ENCODE measurements at regions of chr6 and their contacts with region 1.

Region 1: DNA sequence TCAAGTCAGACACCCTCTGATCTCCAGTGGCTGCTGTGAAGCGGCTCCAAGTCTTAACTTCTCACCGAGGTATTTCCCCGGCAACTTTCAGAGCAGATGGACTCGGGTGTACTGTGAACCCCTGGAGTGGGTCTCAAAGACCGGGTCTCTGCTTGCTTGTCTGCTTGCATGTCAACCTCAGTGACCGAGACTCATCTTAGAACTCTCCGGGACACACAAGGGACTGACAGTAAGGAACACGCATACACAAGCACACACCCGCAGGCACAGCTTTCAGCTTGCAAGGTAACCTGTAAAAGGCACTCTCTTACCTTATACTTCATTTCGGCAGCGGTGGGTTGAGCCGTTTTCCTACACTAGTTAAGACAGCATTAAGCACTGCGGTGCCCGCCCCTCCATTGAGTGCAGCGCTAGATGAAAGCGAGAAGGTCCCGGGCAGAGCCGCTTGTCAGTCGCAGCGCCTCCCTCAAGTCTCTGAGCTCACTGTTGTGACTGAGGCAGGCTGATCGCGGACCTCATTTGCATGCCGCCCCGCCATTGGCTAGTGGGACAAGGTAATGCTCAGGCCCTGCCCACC is at the start of gene NEDD9:
- DNase-seq: peak; percentile 93
- H3K4me3 Mint-ChIP-seq: peak within 1 kb of the TSS; percentile 98
- H3K27ac Mint-ChIP-seq: peak within 1 kb of the TSS; percentile 96
- H3K4me1 Mint-ChIP-seq: peaks cover 86% of the 10 kb centered on the region
- H3K27me3 Mint-ChIP-seq: no peaks in the 10 kb centered on the region
- total RNA-seq, gene NEDD9: 53.2 and 62.1 TPM in 2 replicates

Region 2: GRCh38 chr6:11172501-11173332 is 59.6 kb before region 1 on chr6:
- intact Hi-C with region 1: loop called (anchors 2 kb)
- DNase-seq: peak; percentile 47
- H3K4me3 Mint-ChIP-seq: no peak overlapping the region
- H3K27ac Mint-ChIP-seq: no peak overlapping the region
- H3K4me1 Mint-ChIP-seq: peaks cover 25% of the 10 kb centered on the region
- H3K27me3 Mint-ChIP-seq: peaks cover 3% of the 10 kb centered on the region

Region 3: DNA sequence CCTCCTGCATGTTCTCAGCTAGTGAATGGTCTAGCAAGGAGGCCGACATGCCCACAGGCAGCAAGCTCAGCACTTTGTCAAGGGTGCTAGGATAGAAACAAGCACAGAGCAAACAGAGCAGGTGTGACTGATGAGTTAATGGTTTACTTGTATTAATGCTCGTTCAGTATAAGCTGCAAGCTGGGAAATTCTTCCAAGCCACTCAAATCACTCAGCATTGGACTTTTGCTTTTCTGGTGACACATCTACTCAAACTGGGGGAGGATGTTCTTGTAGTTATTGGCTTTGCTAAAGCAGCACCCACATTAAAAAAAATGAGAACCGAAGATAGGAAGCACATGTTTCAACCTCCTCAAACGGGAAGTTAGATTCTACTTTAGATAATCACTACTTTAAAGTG is 43.3 kb after region 1 on chr6:
- intact Hi-C with region 1: loop called (anchors 1 kb)
- DNase-seq: no peak
- H3K4me3 Mint-ChIP-seq: peak overlapping the region; percentile 0
- H3K27ac Mint-ChIP-seq: peak overlapping the region; percentile 41
- H3K4me1 Mint-ChIP-seq: peaks cover 43% of the 10 kb centered on the region
- H3K27me3 Mint-ChIP-seq: no peaks in the 10 kb centered on the region

Region 4: DNA sequence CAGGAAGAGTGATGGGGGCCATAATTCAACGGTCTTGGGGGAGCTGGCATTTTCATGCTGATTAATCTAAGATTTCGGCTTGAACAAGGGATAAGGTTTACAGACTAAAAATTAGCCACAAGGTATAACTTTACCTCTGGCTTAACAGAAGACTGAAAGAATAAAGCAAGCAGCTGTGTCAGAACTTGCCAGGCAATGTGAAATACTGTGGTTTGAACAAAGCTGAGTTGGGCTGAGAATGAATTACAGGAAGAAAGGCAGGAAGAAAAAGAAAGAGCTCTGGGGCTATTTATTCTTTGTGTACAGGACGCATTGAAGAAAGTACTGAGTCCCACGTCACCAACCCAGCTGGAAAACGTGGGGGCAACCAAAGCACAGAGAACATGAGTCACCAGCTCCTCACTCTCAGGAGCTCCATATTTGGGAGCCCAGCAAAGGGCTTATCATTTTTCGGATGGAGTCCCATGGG is 121.7 kb after region 1 on chr6:
- intact Hi-C with region 1: loop called (anchors 1 kb)
- DNase-seq: peak; percentile 58
- H3K4me3 Mint-ChIP-seq: peak overlapping the region; percentile 74
- H3K27ac Mint-ChIP-seq: peak overlapping the region; percentile 93
- H3K4me1 Mint-ChIP-seq: peaks cover 90% of the 10 kb centered on the region
- H3K27me3 Mint-ChIP-seq: no peaks in the 10 kb centered on the region

Region 5: DNA sequence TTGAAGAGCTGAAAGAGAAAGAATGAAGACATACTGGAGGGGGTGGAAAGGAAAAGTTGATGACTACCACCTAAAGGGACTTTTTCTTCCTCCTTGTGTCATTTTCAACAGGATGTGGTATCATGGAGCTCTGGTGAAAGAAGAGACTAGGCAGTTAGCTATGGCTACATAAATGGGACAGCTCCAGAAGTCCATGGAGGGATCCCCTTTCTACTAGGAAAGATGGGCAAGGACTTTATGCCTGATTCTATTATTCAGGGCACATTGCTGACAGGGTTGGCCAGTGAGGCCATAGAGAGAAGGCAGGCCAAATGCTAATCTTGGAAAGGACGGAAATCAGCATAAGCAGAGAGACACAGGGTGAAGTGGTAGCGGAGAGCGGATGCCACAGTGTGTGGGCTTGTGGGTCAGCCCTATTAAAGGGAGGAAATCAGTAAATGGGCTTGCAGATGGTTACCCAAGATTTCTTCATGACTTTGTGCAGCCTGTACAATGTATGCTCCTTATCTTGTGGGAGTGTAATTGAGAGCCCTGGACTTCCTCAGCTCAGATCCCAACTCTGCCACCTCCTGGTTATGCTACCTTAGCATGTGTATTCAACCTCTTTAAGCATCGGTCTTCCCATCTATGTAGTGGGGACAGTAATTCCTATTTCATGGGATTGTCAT is 227.9 kb after region 1 on chr6:
- intact Hi-C with region 1: loop called (anchors 1 kb)
- DNase-seq: no peak
- H3K4me3 Mint-ChIP-seq: peak overlapping the region; percentile 61
- H3K27ac Mint-ChIP-seq: peak overlapping the region; percentile 88
- H3K4me1 Mint-ChIP-seq: peaks cover 33% of the 10 kb centered on the region
- H3K27me3 Mint-ChIP-seq: no peaks in the 10 kb centered on the region